PC-9 (cell line): ENCODE measurements at regions of chr15 and their contacts with region 1.

Region 1: DNA sequence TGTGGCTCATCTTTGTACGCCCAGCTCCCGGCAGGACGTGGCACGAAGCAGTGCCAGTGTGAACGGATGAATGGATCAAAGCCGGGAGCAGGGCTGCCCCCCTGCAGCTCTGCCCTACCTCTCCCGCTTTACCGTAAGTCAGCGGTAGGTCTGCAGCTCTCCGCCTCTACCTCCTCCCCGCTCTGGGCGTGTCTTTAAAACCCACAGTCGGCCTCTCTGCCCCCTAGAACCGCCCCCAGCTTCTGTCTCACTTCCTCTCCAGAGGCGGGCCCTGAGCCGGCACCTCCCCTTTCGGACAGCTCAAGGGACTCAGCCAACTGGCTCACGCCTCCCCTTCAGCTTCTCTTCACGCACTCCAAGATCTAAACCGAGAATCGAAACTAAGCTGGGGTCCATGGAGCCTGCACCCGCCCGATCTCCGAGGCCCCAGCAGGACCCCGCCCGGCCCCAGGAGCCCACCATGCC is at the start of gene PML:
- DNase-seq: peak; percentile 86 to 91
- H3K4me3 ChIP-seq: peak within 1 kb of the TSS; percentile 92
- H3K27ac ChIP-seq: peak within 1 kb of the TSS; percentile 53
- H3K4me1 ChIP-seq: peaks cover 41% of the 10 kb centered on the region
- H3K27me3 ChIP-seq: no peaks in the 10 kb centered on the region
- CTCF ChIP-seq: no peak
- total RNA-seq, gene PML: 67.2 and 81.8 TPM in 2 replicates

Region 2: DNA sequence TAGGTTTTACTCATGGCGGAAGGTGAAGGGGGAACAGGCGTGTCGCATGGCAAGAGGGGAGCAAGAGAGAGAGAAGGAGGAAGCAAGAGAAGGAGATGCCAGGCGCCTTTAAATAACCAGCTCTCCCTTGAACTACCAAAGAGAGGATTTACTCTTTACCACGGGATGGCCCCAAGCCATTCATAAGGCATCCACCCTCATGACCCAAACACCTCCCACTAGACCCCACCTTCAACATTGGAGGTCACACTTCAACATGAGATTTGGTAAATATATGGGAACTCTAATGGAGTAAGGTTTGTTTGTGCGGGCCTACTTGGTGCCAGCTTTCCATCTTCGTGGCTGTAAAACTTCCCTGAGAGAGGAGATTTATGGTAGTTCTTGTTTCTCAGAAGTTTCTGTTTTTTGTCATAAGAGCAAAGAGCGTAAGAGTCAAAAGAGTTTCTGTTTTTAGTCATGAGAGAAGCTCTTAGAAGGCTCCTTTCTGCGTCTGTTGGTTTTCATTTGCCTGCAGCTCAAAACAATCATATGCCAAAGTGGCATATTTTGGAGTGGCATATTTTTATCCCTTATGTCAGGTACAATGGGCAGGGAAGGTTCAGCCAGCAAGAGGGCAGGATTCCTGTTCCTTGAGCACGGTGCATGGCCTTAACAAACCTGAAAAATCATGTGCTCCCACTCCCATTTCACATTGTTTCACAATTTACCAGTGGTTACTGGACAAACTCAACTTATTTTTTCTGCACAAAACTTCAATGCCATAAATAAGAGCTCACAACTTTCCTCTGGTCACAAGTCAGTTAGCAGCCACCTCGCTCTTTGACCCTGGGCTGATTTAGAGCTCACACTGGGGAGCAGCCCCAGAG is 12.6 kb after region 1 on chr15:
- CTCF ChIA-PET with region 1: no interaction called
- POLR2A ChIA-PET with region 1: interaction called, 12 read pairs
- intact Hi-C with region 1: no loop called
- DNase-seq: no peak
- H3K4me3 ChIP-seq: no peak overlapping the region
- H3K27ac ChIP-seq: no peak overlapping the region
- H3K4me1 ChIP-seq: peaks cover 8% of the 10 kb centered on the region; the same call in 1 of the 2 replicates
- H3K27me3 ChIP-seq: no peaks in the 10 kb centered on the region
- CTCF ChIP-seq: no peak